GM10248 (cell line): ENCODE measurements at regions of chr12 and their contacts with region 1.

Region 1: GRCh38 chr12:12562585-12563261 is at the start of gene DUSP16:
- DNase-seq: peak; percentile 89
- CTCF ChIP-seq: peak; percentile 3

Region 2: DNA sequence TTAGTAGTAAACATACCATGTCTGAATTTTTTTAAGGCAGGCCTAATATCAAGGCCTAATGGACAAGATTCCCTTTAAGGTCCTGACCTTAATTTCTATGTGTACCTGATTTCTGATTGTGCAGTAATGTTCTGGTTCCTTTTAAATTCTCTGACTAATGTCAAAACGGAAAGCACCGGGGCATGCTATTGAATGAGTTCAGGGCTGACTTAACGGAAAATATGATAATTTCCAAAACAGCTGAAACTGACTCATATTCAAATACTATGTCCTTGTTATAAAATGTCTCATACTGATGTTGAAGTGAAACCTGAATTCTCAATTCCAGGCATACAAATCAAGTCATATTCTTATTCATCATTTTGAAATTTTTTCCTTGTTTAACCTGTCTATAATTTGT is 1477.3 kb before region 1 on chr12:
- CTCF ChIA-PET with region 1: no interaction called
- POLR2A ChIA-PET with region 1: no interaction called
- DNase-seq: no peak
- CTCF ChIP-seq: no peak

Region 3: DNA sequence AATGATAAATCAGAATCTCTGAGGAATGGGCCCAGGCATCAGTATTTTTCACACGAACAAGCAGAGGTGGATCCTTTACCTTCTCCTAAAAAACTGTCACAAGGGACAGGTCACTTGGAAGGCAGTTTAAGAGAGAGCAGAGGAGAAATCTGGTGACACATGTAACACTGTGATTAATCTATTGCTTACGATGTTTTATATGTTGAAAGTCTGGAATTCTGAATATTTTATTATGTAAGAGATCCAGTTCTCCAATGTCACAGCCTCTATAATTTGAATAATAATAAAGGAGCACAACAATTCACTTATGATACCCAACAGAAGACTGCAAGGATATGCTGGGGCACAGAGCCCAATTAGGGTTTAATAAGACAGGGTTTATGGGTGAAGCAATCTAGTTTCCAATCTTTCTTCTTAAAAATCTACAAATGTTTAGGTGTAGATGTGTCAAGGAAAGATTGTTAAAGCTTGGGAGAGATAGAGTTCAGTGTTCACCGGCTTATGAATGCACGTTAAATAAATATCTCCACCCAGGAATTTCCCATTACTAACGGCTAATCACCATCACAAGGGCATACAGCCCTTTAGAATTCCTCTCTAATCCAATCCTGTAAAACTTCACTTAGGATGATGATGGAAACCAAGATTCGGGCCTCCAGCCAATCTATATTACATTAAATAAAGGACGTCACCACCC is 23.5 kb before region 1 on chr12:
- CTCF ChIA-PET with region 1: interaction called, 11 read pairs
- POLR2A ChIA-PET with region 1: no interaction called
- DNase-seq: no peak
- CTCF ChIP-seq: no peak

Region 4: GRCh38 chr12:12582193-12582881 is 19.6 kb after region 1 on chr12:
- CTCF ChIA-PET with region 1: interaction called, 40 read pairs
- POLR2A ChIA-PET with region 1: no interaction called
- DNase-seq: peak; percentile 39
- CTCF ChIP-seq: no peak